Lower leg skin (tissue), 4 donors: ENCODE measurements at regions of chr1 and their contacts with region 1.

Region 1: GRCh38 chr1:61043010-61043820 is 39.1 kb upstream of the NFIA start:
- DNase-seq: peak; percentile 79 to 98
- H3K4me3 ChIP-seq: peak overlapping the region; percentile 24
- CTCF ChIP-seq: peak in 1 of 3 donors; percentile 88
- POLR2A ChIP-seq: no peak

Region 2: DNA sequence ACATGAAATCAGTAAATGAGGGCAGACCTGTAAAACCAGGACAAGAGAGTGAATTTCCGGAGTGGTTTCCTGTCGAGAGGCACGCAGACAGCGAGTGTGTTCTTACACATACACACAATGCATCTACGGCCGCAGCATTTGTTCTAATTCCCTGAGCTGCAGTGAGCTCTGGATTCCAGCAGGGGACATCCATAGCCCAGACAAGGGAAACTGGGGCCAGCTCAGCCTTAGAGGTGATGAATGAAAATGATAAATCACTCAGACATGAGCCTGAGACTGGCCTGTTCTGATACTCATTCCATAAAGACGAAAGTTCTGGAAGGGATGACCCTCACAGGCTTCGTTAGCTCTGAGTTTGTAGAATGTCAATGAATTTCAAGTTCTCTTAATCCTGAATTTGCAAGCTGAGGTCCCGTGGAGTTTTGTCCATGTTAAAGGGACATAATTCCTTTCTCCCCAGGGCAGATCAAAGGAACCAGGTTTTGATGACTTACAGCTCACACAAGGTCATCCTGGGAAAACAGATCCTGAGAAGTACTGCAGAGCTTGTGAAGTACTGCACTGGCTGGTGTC is 761.8 kb before region 1 on chr1:
- intact Hi-C with region 1: loop called (anchors 5 kb)
- DNase-seq: peak; percentile 65 to 88
- H3K4me3 ChIP-seq: no peak overlapping the region
- CTCF ChIP-seq: peak in 1 of 3 donors; percentile 53
- POLR2A ChIP-seq: no peak